Activated CD8-positive, alpha-beta T cell treated with anti-CD3 and anti-CD28 coated beads, Interleukin-2, amount 10 ng/mL, durations not matched to agents 7 days and 5 days (primary cell): ENCODE measurements at regions of chr1 and their contacts with region 1.

Region 1: DNA sequence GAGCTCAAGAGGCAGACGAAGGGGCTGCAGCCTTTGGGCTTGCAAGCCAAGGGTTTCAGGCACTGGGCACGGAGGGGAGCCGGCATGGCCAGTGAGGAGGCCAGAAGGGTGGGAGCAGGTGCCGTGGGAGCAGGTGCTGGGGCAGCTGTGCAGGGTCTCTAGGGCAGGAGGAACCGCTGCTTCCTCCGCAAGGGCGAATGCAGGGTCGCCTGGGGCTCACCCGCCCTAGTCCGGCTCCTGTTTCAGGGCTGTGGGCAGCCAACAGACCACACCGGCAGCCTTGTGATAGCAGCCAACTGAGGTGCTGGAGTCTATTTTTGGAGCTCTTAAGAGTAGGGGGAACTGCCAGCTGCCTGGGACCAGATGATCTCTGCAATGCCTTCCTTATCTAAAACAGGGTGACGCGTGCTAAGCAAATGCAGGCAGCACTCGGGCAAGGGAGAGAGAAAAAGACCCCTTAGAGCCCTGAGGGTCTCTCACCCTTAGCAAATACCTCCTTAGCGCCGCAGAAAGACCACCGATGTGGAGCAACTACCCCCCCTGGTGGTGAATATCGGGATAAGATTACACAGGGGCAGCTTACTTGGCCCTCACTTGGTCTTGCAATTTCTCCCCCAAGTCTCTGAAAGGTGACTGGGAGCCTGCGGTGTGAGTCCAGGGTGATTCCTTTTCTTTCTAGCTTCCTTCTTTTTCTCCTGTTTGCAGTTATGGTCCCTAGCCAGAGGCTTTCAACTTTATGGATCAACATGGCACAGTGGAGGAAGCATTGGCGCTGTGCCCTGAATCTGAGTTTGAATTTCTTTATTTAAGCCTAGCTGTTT is 20.7 kb upstream of the MAPKAPK2 start:
- DNase-seq: peak; percentile 84
- ATAC-seq: peak; percentile 92
- H3K4me3 Mint-ChIP-seq: no peak overlapping the region
- H3K27ac Mint-ChIP-seq: no peak overlapping the region
- H3K4me1 Mint-ChIP-seq: peaks cover 22% of the 10 kb centered on the region
- H3K27me3 Mint-ChIP-seq: peaks cover 37% of the 10 kb centered on the region

Region 2: DNA sequence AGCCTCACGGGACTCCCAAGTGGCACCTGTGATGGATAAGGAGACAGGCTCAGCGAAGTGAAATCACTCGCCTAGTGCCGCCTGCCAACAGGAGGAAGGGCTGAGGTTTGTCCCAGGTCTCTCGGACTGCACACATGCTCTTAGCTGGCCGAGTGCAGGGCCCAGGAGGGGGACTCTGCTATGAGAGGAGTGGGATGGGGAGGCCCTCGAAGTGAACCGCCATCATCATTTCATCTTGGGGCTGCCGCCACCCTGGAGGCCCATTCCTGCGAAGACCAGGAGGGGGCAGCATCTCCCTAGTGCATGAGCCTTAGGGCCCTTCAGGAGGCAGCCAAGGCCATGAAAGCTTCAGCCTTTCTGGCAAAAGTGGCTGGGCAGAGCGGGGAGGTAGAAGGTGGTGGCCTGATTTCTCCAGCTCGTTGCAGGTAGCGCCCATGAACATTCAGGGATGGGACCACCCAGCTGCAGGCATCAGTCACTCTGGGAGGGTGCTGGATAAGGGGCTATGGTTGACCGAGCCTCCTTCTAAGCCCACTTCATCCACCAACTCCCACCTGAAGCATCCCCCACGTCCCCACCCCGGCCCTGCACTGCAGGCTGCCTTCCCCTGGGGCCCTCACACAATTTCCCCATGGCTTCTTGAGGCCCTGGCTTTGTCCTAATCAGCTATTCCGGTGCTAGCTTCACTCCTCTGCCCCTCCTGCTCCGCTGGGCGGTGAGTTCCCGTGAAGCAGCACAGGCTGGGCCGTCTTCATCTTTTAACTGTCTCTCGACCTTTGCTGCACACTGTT is 173.9 kb before region 1 on chr1:
- CTCF ChIA-PET with region 1: interaction called, 24 read pairs
- POLR2A ChIA-PET with region 1: no interaction called
- DNase-seq: peak; percentile 78
- ATAC-seq: peak; percentile 84
- H3K4me3 Mint-ChIP-seq: no peak overlapping the region
- H3K27ac Mint-ChIP-seq: peak overlapping the region; percentile 68
- H3K4me1 Mint-ChIP-seq: peaks cover 21% of the 10 kb centered on the region
- H3K27me3 Mint-ChIP-seq: no peaks in the 10 kb centered on the region

Region 3: DNA sequence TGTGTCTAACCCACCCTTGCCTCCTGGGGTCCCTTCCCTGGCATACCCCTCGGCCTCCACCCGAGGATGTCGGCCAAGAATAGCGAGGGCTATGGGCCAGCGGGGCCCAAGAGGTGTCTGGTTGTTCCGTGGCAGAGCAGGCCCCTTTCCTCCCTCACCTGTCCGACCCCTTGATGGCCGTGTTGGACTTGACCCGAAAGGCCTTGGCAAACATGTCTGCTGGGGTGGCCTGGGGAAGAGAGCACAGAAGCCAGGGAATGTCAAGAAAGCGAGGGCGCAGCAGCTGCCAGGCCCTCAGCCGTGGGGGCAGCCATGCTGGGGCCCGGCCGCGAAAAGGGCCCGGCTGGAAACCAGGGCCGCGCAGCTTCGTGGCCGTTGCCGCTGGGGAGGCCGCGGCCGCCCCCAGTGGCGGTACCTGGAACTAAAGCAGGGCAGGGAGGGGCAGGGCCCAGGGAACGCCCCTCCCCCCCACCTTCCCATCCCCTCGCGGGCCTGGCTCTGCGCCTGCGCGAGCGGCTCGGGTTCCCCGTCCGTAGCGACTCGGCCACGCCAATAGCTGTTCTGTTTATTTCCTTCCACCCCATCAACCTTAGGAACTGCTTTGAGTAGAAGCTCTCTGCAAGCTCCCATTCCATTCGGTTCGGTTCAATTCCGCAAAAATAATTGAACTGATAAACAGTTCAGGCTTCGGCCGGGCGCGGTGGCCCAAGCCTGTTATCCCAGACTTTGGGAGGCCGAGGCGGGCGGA is 51.7 kb before region 1 on chr1 and contains the start of gene EIF2D:
- CTCF ChIA-PET with region 1: interaction called, 199 read pairs
- POLR2A ChIA-PET with region 1: interaction called, 3 read pairs
- DNase-seq: peak; percentile 95
- ATAC-seq: peak; percentile 98
- H3K4me3 Mint-ChIP-seq: peak within 1 kb of the TSS; percentile 94
- H3K27ac Mint-ChIP-seq: peak within 1 kb of the TSS; percentile 90
- H3K4me1 Mint-ChIP-seq: peaks cover 35% of the 10 kb centered on the region
- H3K27me3 Mint-ChIP-seq: peaks cover 10% of the 10 kb centered on the region
- total RNA-seq, gene EIF2D: 41.6 to 45.1 TPM

Region 4: DNA sequence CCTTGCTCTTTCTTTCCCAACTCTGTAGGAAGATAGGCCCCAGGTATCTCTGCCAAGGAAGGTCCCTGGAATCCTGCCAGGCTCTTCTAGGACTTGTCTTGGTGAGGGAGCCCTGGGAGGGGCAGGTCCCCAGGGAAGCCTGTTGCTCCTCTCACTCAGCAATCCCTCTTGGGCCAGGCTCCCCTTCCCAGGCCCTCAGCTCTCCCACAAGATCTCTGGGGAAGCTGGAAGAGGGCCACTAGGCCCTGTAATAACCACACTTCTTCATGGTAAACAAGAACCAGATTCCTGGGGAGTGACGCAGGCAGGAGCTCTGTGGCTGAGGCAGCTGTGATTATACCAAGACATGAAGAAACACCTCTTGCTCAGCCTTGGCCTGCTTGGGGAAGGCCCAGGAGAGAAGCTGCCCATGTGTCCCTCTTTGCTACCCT is 10.7 kb after region 1 on chr1:
- CTCF ChIA-PET with region 1: interaction called, 88 read pairs
- POLR2A ChIA-PET with region 1: no interaction called
- DNase-seq: no peak
- ATAC-seq: no peak
- H3K4me3 Mint-ChIP-seq: no peak overlapping the region
- H3K27ac Mint-ChIP-seq: no peak overlapping the region
- H3K4me1 Mint-ChIP-seq: peaks cover 3% of the 10 kb centered on the region
- H3K27me3 Mint-ChIP-seq: peaks cover 4% of the 10 kb centered on the region

Region 5: DNA sequence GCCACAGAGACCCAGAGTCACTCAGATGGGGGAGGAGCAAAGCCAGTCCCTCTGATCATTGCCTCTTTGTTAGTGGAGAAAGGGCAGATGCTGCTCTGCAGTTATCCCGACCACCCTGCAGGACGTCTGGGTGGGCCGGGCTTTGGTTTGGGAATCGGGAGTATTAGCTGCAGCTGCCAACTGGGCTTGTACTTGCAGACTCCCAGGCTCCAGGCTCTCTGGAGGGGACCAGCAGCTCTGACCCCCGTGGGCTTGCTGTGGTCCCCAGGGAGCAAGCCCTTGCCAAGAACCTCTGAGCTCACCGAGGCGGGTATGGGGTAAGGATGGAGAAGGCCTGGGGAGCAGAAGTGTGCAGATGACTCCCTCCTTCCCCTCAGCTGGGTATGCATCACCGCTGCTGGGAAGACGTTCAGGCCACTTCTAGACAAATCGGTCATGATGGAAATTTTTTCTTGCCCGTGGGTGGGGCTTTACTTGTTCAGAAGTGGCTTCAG is 42.3 kb after region 1 on chr1:
- CTCF ChIA-PET with region 1: interaction called, 32 read pairs
- POLR2A ChIA-PET with region 1: no interaction called
- DNase-seq: no peak
- ATAC-seq: no peak
- H3K4me3 Mint-ChIP-seq: no peak overlapping the region
- H3K27ac Mint-ChIP-seq: no peak overlapping the region
- H3K4me1 Mint-ChIP-seq: peaks cover 76% of the 10 kb centered on the region
- H3K27me3 Mint-ChIP-seq: no peaks in the 10 kb centered on the region

Region 6: DNA sequence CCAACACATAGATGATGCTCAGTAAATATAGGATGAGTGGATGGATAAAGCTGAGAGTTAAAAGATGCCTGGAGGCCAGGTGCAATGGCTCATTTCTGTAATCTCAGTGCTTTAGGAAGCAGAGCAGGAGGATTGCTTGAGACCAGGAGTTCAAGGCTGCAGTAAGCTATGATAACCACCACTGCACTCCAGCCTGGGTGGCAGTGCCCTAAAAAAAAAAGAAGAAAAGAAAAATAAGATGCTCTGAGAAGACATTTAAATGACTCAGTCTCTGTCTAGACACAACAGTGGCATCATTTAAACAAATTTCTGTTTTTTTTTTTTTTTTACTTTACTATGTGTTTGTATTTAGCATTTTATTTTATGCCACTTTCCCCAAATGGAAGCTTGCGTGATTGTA is 81.3 kb after region 1 on chr1:
- CTCF ChIA-PET with region 1: no interaction called
- POLR2A ChIA-PET with region 1: no interaction called
- DNase-seq: no peak
- ATAC-seq: no peak
- H3K4me3 Mint-ChIP-seq: no peak overlapping the region
- H3K27ac Mint-ChIP-seq: no peak overlapping the region
- H3K4me1 Mint-ChIP-seq: peaks cover 52% of the 10 kb centered on the region
- H3K27me3 Mint-ChIP-seq: peaks cover 16% of the 10 kb centered on the region

Region 7: GRCh38 chr1:206982216-206982615 is 318.2 kb after region 1 on chr1:
- CTCF ChIA-PET with region 1: interaction called, 25 read pairs
- POLR2A ChIA-PET with region 1: no interaction called
- DNase-seq: peak; percentile 75
- ATAC-seq: peak; percentile 82
- H3K4me3 Mint-ChIP-seq: no peak overlapping the region
- H3K27ac Mint-ChIP-seq: no peak overlapping the region
- H3K4me1 Mint-ChIP-seq: no peaks in the 10 kb centered on the region
- H3K27me3 Mint-ChIP-seq: peaks cover 32% of the 10 kb centered on the region